ENCODE measurements at regions of chr4 and their contacts with region 1.

Region 1: GRCh38 chr4:18463987-18464559 is 442.5 kb upstream of the LCORL start:
- DNase-seq: no peak
- H3K4me3 ChIP-seq: no peak overlapping the region
- H3K27ac ChIP-seq: no peak overlapping the region
- H3K4me1 ChIP-seq: no peaks in the 10 kb centered on the region
- H3K27me3 ChIP-seq: no peaks in the 10 kb centered on the region
- CTCF ChIP-seq: no peak
- POLR2A ChIP-seq: no peak

Region 2: DNA sequence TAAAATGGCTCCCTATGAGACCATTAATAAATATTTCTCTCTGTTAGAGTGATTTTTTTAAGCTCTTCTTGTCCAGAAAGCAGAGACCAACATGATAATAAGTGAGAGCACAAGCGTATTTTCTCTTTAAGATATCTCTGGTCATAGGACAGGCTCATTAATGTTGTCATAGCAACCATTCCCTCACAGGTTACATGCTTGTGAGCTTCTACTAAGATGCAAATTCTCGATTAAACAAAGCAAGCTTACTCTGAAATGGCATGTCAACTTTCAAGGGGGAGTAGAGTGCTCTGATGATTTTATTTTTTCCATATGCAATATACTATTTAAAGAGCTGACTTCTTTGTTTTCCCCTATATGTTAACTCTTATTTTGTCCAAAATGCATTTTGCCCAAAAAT is 44.7 kb after region 1 on chr4:
- intact Hi-C with region 1: no loop called
- DNase-seq: no peak
- H3K4me3 ChIP-seq: no peak overlapping the region
- H3K27ac ChIP-seq: no peak overlapping the region
- H3K4me1 ChIP-seq: no peaks in the 10 kb centered on the region
- H3K27me3 ChIP-seq: no peaks in the 10 kb centered on the region
- CTCF ChIP-seq: no peak
- POLR2A ChIP-seq: no peak

Region 3: DNA sequence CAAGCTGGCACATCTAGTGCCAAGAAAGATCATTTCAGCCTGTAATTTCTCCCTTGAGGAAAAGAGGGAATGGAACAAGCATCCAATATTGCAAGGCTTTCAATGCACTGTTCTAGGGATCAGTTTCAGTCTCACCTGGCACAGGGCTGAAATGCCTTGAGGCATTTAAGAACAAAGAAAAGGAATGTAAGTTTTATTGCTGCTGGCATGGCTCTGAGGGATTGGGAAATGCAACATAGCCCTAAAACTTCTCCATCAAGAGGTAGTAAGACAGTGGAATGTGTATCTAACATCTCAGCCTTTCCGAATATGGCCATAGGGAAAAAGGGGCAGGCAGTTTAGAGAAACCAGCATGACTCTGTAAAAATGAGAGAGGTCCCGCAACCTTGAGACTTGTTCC is 290.1 kb after region 1 on chr4:
- intact Hi-C with region 1: no loop called
- DNase-seq: no peak
- H3K4me3 ChIP-seq: no peak overlapping the region
- H3K27ac ChIP-seq: no peak overlapping the region
- H3K4me1 ChIP-seq: no peaks in the 10 kb centered on the region
- H3K27me3 ChIP-seq: no peaks in the 10 kb centered on the region
- CTCF ChIP-seq: no peak
- POLR2A ChIP-seq: no peak

Region 4: DNA sequence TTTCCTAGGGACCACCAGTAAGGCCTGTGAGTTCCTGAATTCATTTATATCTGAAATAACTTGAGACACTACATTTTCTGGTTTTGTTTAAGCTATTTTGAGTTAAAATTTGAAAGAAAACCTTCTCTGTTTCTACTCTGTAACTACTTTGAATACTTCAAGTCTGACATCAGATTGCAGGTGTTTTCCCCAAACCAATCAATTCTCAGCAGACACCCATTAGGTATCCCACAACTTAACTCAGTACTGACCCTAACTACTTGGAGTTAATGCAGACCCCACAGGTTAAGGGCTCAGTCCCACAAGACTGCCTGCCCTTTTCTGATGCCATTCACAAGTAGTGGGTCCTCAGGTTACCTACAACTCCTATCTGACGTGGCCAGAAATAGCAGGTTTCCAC is 687.6 kb after region 1 on chr4:
- intact Hi-C with region 1: loop called (anchors 5 kb)
- DNase-seq: no peak
- H3K4me3 ChIP-seq: no peak overlapping the region
- H3K27ac ChIP-seq: no peak overlapping the region
- H3K4me1 ChIP-seq: no peaks in the 10 kb centered on the region
- H3K27me3 ChIP-seq: no peaks in the 10 kb centered on the region
- CTCF ChIP-seq: no peak
- POLR2A ChIP-seq: no peak